ENCODE measurements at regions of chrX and their contacts with region 1.

Region 1: GRCh38 chrX:42714981-42715700 is 62.8 kb downstream of the PPP1R2C start:
- DNase-seq: peak; percentile 25
- H3K4me3 ChIP-seq: no peak overlapping the region
- H3K27ac ChIP-seq: no peak overlapping the region
- H3K4me1 ChIP-seq: no peaks in the 10 kb centered on the region
- H3K27me3 ChIP-seq: no peaks in the 10 kb centered on the region
- CTCF ChIP-seq: peak; percentile 47
- EP300 ChIP-seq: no peak
- RAD21 ChIP-seq: 0 out of 2 replicates have a peak, but pooled peaks have one; percentile 24

Region 2: DNA sequence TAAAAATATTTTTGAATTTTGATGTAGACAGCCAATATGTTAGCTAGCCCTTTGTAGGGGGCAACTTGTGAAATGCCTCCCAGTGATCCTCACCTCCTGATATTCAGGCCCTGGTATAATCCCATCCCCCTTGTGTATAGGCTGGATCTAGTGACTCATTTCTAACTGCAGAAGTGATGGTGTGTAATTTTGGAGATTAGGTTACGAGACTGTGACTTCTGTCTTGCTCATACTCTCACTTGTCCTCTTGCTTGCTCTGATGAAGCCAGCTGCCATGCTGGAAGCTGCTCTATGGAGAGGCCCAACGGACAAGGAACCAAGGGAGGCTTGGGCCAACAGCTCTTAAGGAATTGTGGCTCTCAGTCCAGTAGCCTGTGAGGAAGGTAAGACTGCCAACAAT is 929.5 kb before region 1 on chrX:
- CTCF ChIA-PET with region 1: no interaction called
- POLR2A ChIA-PET with region 1: no interaction called
- DNase-seq: no peak
- H3K4me3 ChIP-seq: no peak overlapping the region
- H3K27ac ChIP-seq: no peak overlapping the region
- H3K4me1 ChIP-seq: no peaks in the 10 kb centered on the region
- H3K27me3 ChIP-seq: no peaks in the 10 kb centered on the region
- CTCF ChIP-seq: no peak
- EP300 ChIP-seq: no peak
- RAD21 ChIP-seq: no peak

Region 3: DNA sequence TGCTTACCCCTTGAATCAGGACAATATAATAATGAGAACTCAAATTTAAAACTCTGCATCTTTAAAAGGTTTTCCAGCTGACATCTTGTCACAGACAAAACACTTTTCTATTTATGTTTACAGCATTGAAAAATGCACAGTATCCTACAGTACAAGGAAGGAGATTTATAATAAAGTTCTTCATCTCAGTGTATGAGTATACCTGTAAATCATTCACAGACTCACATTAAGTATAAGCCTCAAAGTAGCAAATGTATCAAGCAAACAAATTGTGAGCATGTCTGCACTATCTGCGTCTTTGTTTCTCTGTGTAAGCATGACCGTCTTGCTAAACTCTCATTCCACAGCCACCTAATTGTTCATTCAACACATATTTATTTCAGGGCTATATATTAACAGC is 10.1 kb after region 1 on chrX:
- CTCF ChIA-PET with region 1: interaction called, 11 read pairs
- POLR2A ChIA-PET with region 1: no interaction called
- DNase-seq: no peak
- H3K4me3 ChIP-seq: no peak overlapping the region
- H3K27ac ChIP-seq: no peak overlapping the region
- H3K4me1 ChIP-seq: no peaks in the 10 kb centered on the region
- H3K27me3 ChIP-seq: no peaks in the 10 kb centered on the region
- CTCF ChIP-seq: no peak
- EP300 ChIP-seq: no peak
- RAD21 ChIP-seq: no peak

Region 4: DNA sequence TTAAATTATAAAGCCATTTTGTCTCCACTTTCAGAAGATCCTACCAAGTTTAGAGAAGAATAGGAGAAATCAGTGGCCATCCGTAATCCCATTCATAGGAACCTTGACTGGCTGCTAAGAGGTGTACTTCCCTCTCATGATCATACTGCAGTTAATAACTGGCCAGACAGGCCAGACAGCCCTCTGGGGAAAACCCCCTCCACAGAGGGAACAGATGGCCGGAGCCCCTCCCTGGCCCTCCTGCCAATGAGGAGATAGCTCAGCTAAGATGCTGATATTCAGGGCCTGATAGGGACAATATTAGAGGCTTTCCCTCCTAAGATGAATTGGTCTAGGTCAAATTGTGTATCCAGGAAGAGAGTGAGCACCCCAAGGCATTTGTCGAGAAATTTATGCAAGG is 740.9 kb after region 1 on chrX:
- CTCF ChIA-PET with region 1: no interaction called
- POLR2A ChIA-PET with region 1: no interaction called
- DNase-seq: peak; percentile 28
- H3K4me3 ChIP-seq: no peak overlapping the region
- H3K27ac ChIP-seq: peak overlapping the region in 1 of 2 experiments; percentile 28; a peak in 1 of 4 replicates
- H3K4me1 ChIP-seq: no peaks in the 10 kb centered on the region
- H3K27me3 ChIP-seq: no peaks in the 10 kb centered on the region
- CTCF ChIP-seq: no peak
- EP300 ChIP-seq: no peak
- RAD21 ChIP-seq: no peak